Caco-2 (cell line): ENCODE measurements at regions of chr12 and their contacts with region 1.

Region 1: GRCh38 chr12:103965590-103966504 is at the start of gene TDG:
- DNase-seq: peak; percentile 96 to 99
- H3K4me3 ChIP-seq: peak within 1 kb of the TSS; percentile 63
- H3K4me3 Mint-ChIP-seq: peak within 1 kb of the TSS; percentile 94
- H3K27ac Mint-ChIP-seq: peak within 1 kb of the TSS; percentile 99
- H3K4me1 ChIP-seq: no peaks in the 10 kb centered on the region; the same call in 1 of the 2 replicates
- H3K4me1 Mint-ChIP-seq: peaks cover 11% of the 10 kb centered on the region
- H3K27me3 ChIP-seq: no peaks in the 10 kb centered on the region
- H3K27me3 Mint-ChIP-seq: no peaks in the 10 kb centered on the region
- CTCF ChIP-seq: no peak
- total RNA-seq, gene TDG: 28.4 and 29.5 TPM in 2 replicates

Region 2: GRCh38 chr12:102503056-102503681 is 1462.7 kb before region 1 on chr12:
- CTCF ChIA-PET with region 1: no interaction called
- POLR2A ChIA-PET with region 1: no interaction called
- intact Hi-C with region 1: no loop called
- DNase-seq: no peak
- H3K4me3 ChIP-seq: no peak overlapping the region
- H3K4me3 Mint-ChIP-seq: no peak overlapping the region
- H3K27ac Mint-ChIP-seq: no peak overlapping the region
- H3K4me1 ChIP-seq: no peaks in the 10 kb centered on the region
- H3K4me1 Mint-ChIP-seq: no peaks in the 10 kb centered on the region
- H3K27me3 ChIP-seq: no peaks in the 10 kb centered on the region
- H3K27me3 Mint-ChIP-seq: peaks cover 9% of the 10 kb centered on the region
- CTCF ChIP-seq: no peak

Region 3: GRCh38 chr12:103841690-103842584 is 123.9 kb before region 1 on chr12:
- CTCF ChIA-PET with region 1: no interaction called
- POLR2A ChIA-PET with region 1: no interaction called
- intact Hi-C with region 1: no loop called
- DNase-seq: peak; percentile 55 to 71
- H3K4me3 ChIP-seq: peak overlapping the region; percentile 84
- H3K4me3 Mint-ChIP-seq: peak overlapping the region; percentile 75
- H3K27ac Mint-ChIP-seq: peak overlapping the region; percentile 75
- H3K4me1 ChIP-seq: peaks cover 27% of the 10 kb centered on the region
- H3K4me1 Mint-ChIP-seq: peaks cover 24% of the 10 kb centered on the region
- H3K27me3 ChIP-seq: no peaks in the 10 kb centered on the region
- H3K27me3 Mint-ChIP-seq: no peaks in the 10 kb centered on the region
- CTCF ChIP-seq: no peak

Region 4: DNA sequence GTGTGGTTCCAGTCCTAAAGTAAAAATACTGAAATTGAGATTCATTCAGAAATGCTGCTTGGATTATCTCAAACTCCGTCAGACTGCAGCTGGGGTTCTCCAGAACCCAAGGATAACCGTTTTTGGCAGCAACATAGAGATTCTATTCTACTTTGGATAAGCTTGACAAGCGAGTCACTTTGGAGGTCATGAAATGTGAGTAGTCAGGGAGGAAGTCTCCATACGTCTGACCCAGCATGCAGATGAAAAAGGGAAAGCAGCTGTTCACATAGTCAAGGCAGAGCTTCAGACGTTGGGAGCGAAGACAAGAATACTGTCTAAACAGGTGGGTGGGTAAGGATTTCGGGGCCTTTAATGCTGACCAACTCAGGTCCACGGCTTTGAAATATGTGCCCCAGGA is 50.5 kb before region 1 on chr12:
- CTCF ChIA-PET with region 1: no interaction called
- POLR2A ChIA-PET with region 1: no interaction called
- intact Hi-C with region 1: no loop called
- DNase-seq: no peak
- H3K4me3 ChIP-seq: no peak overlapping the region
- H3K4me3 Mint-ChIP-seq: no peak overlapping the region
- H3K27ac Mint-ChIP-seq: no peak overlapping the region
- H3K4me1 ChIP-seq: no peaks in the 10 kb centered on the region
- H3K4me1 Mint-ChIP-seq: no peaks in the 10 kb centered on the region
- H3K27me3 ChIP-seq: no peaks in the 10 kb centered on the region
- H3K27me3 Mint-ChIP-seq: peaks cover 3% of the 10 kb centered on the region
- CTCF ChIP-seq: no peak

Region 5: GRCh38 chr12:104064031-104064822 is 98.4 kb after region 1 on chr12 and contains the start of gene HCFC2:
- CTCF ChIA-PET with region 1: no interaction called
- POLR2A ChIA-PET with region 1: no interaction called
- intact Hi-C with region 1: loop called (anchors 2 kb)
- DNase-seq: peak; percentile 90 to 93
- H3K4me3 ChIP-seq: peak within 1 kb of the TSS; percentile 97
- H3K4me3 Mint-ChIP-seq: peak within 1 kb of the TSS; percentile 91
- H3K27ac Mint-ChIP-seq: peak within 1 kb of the TSS; percentile 64
- H3K4me1 ChIP-seq: no peaks in the 10 kb centered on the region
- H3K4me1 Mint-ChIP-seq: no peaks in the 10 kb centered on the region
- H3K27me3 ChIP-seq: no peaks in the 10 kb centered on the region
- H3K27me3 Mint-ChIP-seq: peaks cover 7% of the 10 kb centered on the region
- CTCF ChIP-seq: no peak
- total RNA-seq, gene HCFC2: 4.9 and 5.4 TPM in 2 replicates

Region 6: DNA sequence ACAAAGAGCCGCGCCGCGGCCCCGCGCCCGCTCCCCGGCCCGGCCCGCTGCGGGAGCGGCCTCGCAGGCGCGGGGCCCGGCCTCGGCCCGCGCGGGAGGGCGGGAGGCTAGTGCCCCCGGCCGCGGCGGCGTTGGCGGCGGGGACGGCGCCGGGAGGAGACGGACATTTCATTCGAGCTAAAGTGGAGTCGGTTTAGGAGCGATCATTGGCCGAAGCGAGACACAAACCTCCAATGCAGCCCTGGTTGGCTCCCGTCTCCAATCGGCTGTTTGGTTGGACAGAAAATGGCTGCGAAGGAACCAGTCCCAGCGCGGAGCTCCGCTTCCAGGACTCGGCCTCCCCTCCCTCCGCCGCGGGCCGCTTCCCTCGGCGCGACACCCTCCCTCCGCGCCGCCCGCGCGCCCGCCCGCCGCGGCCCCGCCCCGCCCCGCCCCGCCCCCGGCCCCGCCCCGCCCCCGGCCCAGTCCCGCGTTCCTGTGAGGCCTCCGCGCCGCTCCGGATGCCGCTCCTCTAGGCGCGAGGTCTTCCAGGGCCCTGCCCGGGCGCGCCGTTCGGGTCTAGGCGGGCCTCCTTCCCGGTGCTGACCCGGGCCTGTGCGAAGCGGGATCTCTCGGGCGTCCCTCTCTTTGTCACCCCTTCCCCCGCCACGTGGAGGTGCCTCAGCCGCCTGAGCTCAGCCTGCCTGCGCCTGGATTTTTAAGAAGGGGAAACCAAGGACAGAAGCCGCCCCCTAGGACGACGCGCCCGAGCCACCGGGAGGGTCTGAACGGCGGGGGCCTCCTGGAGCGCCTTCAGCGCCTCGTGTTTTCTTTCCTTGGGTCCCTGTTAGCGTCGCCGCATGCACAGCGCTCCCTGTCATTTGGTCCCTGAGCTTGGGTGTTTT is 172.3 kb after region 1 on chr12 and contains the start of gene NFYB:
- CTCF ChIA-PET with region 1: no interaction called
- POLR2A ChIA-PET with region 1: interaction called, 5 read pairs
- intact Hi-C with region 1: loop called (anchors 5 kb)
- DNase-seq: peak; percentile 94 to 96
- H3K4me3 ChIP-seq: peak within 1 kb of the TSS; percentile 73
- H3K4me3 Mint-ChIP-seq: peak within 1 kb of the TSS; percentile 75
- H3K27ac Mint-ChIP-seq: peak within 1 kb of the TSS; percentile 47
- H3K4me1 ChIP-seq: peaks cover 8% of the 10 kb centered on the region; the same call in 1 of the 2 replicates
- H3K4me1 Mint-ChIP-seq: no peaks in the 10 kb centered on the region
- H3K27me3 ChIP-seq: no peaks in the 10 kb centered on the region
- H3K27me3 Mint-ChIP-seq: peaks cover 4% of the 10 kb centered on the region
- CTCF ChIP-seq: no peak
- total RNA-seq, gene NFYB: 30.8 and 36.9 TPM in 2 replicates